ENCODE measurements at regions of chr1 and their contacts with region 1.

Region 1: DNA sequence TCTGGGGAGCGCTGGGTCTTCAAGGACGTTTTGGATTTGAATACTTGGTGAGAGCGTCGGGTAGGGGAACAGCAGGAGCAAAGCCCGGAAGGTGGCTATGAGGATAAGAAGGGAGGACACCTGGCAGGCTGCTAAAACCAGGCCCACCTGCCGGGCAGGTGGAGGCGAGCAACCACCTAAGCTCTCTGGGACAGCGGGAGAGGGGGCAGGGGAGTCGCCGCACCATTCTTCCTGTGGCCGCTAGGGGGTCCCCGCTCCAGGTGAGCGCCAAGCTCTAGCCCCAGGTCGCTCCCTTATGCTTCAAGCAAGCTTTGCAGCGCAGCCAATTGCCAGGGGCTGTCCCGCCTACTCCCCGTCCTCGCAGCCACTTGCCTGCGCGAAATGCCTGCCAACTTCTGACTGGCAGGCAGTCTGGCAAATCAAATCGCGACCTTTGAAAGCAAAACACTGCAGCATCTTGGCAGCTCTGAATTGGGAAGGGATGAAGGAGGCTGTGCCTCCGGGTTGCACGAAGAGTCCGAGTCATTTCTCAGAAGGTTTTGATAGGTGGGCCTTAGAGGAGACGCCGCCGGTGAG is at the start of gene NIPAL3:
- DNase-seq: peak; percentile 86
- ATAC-seq: peak; percentile 92
- H3K4me3 Mint-ChIP-seq: peak within 1 kb of the TSS; percentile 98
- H3K27ac Mint-ChIP-seq: peak within 1 kb of the TSS; percentile 80
- H3K4me1 Mint-ChIP-seq: peaks cover 53% of the 10 kb centered on the region
- H3K27me3 Mint-ChIP-seq: no peaks in the 10 kb centered on the region
- CTCF ChIP-seq: peak; percentile 85
- total RNA-seq, gene NIPAL3: 21.0 and 23.2 TPM in 2 replicates

Region 2: DNA sequence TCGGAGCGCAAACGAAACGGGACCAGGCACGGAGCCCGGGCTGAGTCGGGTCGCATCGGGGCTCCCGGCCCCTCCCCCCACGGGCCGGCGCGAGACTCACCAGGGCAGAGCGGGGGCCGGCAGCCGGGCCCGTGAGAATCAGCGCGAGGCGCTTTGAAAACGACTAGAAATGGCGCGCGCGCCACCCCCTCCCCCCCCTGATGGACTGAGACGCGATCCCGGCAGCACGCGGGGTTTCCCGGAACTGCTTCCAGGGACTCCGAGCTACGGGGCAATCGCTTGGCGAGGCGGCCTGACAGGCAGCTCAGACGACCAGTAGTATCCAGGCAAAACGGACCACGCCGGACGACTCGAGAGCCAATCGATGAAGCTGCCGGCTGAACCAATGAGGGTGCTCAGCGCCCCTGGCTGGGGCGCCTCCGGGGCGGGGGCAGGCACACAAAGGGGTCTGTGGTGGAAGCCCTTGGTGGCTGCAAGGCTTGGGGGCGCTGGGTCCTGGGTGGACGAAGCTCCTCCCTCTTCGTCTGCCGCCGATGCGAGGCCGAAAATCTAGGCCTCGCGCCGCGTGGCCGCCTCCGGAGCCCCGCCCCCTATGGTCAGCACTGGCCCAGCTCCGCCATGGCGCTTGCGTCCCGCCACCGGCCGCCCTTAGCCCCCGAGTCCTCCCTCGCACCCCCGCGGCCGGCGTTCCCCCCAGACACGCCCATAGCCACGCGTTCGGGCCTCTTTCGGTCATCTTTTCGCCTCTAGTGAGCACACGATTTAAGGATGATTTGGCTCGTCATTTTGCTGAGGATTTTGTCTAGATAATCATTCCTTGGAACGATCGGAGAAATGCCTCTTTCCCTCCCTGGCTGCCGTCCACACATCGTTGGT is 1071.1 kb before region 1 on chr1 and contains the start of gene HNRNPR:
- CTCF ChIA-PET with region 1: no interaction called
- POLR2A ChIA-PET with region 1: no interaction called
- intact Hi-C with region 1: loop called (anchors 10 kb)
- DNase-seq: peak; percentile 89
- ATAC-seq: peak; percentile 96
- H3K4me3 Mint-ChIP-seq: peak within 1 kb of the TSS; percentile 92
- H3K27ac Mint-ChIP-seq: peak within 1 kb of the TSS; percentile 92
- H3K4me1 Mint-ChIP-seq: peaks cover 48% of the 10 kb centered on the region
- H3K27me3 Mint-ChIP-seq: no peaks in the 10 kb centered on the region
- CTCF ChIP-seq: no peak
- total RNA-seq, gene HNRNPR: 171 and 172 TPM in 2 replicates

Region 3: GRCh38 chr1:24070821-24071393 is 344.5 kb before region 1 on chr1:
- CTCF ChIA-PET with region 1: no interaction called
- POLR2A ChIA-PET with region 1: no interaction called
- intact Hi-C with region 1: no loop called
- DNase-seq: peak; percentile 51
- ATAC-seq: peak; percentile 96
- H3K4me3 Mint-ChIP-seq: no peak overlapping the region
- H3K27ac Mint-ChIP-seq: no peak overlapping the region
- H3K4me1 Mint-ChIP-seq: no peaks in the 10 kb centered on the region
- H3K27me3 Mint-ChIP-seq: peaks cover 2% of the 10 kb centered on the region
- CTCF ChIP-seq: peak; percentile 85

Region 4: DNA sequence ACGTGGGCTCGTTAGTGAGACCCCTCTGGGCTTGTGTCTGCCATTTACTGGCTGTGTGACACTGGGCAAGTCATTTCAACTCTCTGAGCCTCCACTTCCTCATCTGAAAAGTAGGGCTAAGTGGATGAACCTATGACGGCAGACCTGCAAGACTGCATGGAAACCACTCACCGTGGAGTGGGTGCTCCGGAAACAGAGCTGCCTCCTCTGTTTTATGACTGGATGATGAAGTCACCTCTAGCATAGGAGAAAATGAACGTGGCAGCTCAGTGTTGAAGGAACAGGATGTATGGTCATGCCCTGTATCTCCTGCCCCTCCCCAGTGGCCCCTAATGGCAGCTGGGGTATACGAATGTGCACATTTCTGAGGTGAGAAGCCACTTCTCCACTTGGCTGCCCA is 42.4 kb before region 1 on chr1:
- CTCF ChIA-PET with region 1: no interaction called
- POLR2A ChIA-PET with region 1: interaction called, 3 read pairs
- intact Hi-C with region 1: loop called (anchors 1 kb)
- DNase-seq: peak; percentile 25
- ATAC-seq: peak; percentile 92
- H3K4me3 Mint-ChIP-seq: peak overlapping the region; percentile 21
- H3K27ac Mint-ChIP-seq: peak overlapping the region; percentile 87
- H3K4me1 Mint-ChIP-seq: peaks cover 20% of the 10 kb centered on the region
- H3K27me3 Mint-ChIP-seq: no peaks in the 10 kb centered on the region
- CTCF ChIP-seq: no peak

Region 5: DNA sequence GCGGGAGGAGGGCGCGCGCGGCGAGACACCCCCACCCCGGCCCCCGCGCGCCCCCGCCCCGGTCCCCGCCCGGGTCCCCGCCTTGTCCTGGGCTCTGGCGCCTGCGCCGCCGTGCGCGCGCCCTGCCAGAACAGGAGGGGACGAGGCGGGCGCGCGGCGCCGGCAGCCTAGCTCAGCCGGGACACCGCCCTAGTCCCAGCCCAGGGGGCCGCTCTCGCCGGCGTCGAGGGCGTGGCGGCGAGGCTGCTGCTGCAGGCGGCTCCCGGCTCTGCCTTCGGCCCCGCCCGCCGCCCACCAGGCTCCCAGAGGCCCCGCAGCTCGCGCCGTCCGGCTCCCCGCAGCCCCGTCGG is 87.3 kb after region 1 on chr1 and contains the start of gene RCAN3:
- CTCF ChIA-PET with region 1: interaction called, 9 read pairs
- POLR2A ChIA-PET with region 1: interaction called, 42 read pairs
- intact Hi-C with region 1: loop called (anchors 1 kb)
- DNase-seq: peak; percentile 89
- ATAC-seq: peak; percentile 86
- H3K4me3 Mint-ChIP-seq: peak within 1 kb of the TSS; percentile 91
- H3K27ac Mint-ChIP-seq: peak within 1 kb of the TSS; percentile 97
- H3K4me1 Mint-ChIP-seq: peaks cover 52% of the 10 kb centered on the region
- H3K27me3 Mint-ChIP-seq: no peaks in the 10 kb centered on the region
- CTCF ChIP-seq: no peak
- total RNA-seq, gene RCAN3: 22.8 and 23.6 TPM in 2 replicates

Region 6: GRCh38 chr1:24586970-24587820 is 171.8 kb after region 1 on chr1:
- CTCF ChIA-PET with region 1: interaction called, 74 read pairs
- POLR2A ChIA-PET with region 1: interaction called, 14 read pairs
- intact Hi-C with region 1: loop called (anchors 1 kb)
- DNase-seq: no peak
- ATAC-seq: peak; percentile 96
- H3K4me3 Mint-ChIP-seq: no peak overlapping the region
- H3K27ac Mint-ChIP-seq: no peak overlapping the region
- H3K4me1 Mint-ChIP-seq: peaks cover 4% of the 10 kb centered on the region
- H3K27me3 Mint-ChIP-seq: peaks cover 5% of the 10 kb centered on the region
- CTCF ChIP-seq: no peak

Region 7: DNA sequence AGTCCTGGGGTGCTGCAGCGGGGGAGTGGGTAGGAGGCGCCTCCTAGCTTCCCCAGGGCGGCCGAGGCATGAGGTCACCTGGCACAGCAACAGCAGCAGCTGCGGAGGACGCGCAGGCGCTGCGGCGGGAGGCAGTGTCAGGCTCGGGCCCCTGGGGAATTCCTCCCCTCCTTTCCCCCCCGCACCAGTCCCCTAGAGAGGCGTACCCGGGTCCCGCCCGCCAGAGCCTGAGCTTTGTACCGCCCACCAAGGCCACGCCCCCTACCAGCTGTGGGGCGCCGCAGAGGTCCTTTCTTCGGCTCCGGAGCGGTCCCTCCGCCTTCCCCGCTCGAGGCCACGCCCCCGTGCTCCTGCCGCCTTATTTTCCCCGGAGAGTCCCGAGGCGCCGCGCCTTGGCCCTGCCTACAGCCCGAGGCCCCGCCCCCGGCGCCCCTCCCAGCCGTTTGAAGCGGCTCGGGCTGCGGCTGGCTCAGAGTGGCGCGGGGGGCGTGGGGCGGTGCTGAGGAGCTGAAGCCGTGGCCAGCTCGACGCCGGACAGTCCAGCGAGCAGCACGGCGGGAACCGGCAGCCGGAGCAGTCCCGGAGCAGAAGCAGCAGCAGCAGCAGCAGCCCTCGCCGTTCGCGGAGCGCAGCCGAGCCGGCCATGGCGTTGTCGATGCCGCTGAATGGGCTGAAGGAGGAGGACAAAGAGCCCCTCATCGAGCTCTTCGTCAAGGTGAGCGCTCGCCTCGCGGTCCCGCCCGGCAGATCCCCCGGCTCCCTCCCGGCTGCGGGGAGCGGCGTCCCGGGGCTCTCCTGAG is 329.7 kb after region 1 on chr1 and contains the start of gene CLIC4:
- CTCF ChIA-PET with region 1: no interaction called
- POLR2A ChIA-PET with region 1: no interaction called
- intact Hi-C with region 1: loop called (anchors 5 kb)
- DNase-seq: peak; percentile 99
- ATAC-seq: peak; percentile 78
- H3K4me3 Mint-ChIP-seq: peak within 1 kb of the TSS; percentile 95
- H3K27ac Mint-ChIP-seq: peak within 1 kb of the TSS; percentile 99
- H3K4me1 Mint-ChIP-seq: peaks cover 73% of the 10 kb centered on the region
- H3K27me3 Mint-ChIP-seq: no peaks in the 10 kb centered on the region
- CTCF ChIP-seq: no peak
- total RNA-seq, gene CLIC4: 98.2 and 99.8 TPM in 2 replicates

Measured in activated B cell treated with CpG ODN at 0.5 μM for 24 hours (primary cell).